Activated naive CD4-positive, alpha-beta T cell treated with anti-CD3 and anti-CD28 coated beads for 36 hours (primary cell): ENCODE measurements at regions of chr7 and their contacts with region 1.

Region 1: DNA sequence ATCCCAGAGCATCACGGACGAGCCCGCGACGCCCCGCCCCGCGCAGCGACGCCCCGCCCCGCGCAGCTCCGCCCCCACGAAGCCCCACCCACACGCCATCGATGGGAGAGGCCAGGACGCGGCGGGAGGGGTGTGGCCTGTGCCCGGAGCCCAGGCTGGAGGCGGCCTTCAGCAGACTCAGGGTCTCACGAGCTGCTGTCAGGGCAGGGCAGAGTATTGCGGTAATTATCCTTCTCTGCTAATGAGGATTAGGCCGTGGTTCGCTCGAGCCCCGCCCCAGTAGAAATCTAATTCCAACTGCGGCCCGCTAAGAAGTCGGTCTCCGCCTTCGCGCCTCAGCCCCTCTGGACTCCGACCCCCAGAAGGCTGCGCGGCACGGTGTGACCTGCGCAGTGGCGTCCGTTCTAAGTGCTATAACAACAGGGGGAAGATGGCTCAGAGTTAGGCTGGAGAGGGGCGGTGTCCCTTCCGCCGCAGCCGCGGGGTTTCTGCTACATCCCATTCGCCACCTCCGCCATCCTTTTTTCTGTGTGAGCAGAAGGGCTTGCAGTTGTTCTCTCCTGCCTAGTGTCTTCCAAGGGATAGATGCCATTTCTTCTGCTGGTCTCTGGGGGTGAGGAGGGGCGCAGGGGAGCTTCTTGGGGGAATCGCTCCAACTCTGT is 337 bp upstream of the NT5C3A start:
- DNase-seq: peak; percentile 93
- H3K4me3 Mint-ChIP-seq: peak overlapping the region; percentile 92
- H3K27ac Mint-ChIP-seq: peak overlapping the region; percentile 88
- H3K4me1 Mint-ChIP-seq: peaks cover 30% of the 10 kb centered on the region
- H3K27me3 Mint-ChIP-seq: no peaks in the 10 kb centered on the region

Region 2: DNA sequence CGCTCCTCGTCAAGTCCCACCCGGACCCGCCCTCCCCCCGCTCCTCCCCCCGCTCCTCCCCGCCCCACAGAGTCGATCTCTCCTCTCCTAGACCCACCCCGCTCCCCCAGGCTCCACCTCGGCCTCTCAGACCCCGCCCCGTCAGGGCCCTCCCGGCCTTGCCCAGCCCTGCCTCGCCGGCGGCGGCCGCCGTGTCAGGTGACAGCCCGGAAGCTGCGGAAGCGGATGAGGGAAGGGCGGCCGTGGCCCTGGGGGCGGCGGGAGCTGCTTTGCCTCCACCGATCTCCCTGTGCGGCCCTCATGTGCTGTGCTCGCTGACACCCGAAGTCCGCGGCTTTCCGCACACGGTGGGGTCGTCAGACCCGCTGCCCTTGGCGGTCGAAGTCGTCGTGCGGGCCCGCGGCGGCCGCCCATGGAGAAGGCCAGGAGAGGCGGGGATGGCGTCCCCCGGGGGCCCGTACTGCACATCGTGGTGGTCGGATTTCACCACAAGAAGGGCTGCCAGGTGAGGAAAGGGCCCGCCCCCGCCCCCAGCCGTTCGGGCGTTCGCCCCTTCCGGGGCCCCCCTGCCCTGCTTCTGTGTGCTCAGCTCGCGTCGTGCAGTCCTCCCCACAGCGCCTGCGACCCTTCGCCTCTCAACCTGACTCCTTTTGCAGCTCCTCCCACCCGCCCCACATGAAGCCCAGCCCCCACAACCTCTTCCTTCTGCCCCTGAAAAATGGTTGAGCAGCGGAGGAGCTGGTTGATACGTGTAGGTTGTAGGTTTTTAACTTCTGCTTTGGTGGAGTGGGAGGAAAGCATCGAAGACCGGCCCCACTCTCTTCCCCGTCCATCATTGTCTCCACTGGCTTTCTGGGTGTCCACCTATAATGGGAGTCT is 567.4 kb before region 1 on chr7 and contains the start of gene AVL9:
- CTCF ChIA-PET with region 1: no interaction called
- intact Hi-C with region 1: loop called (anchors 1 kb)
- DNase-seq: peak; percentile 99
- H3K4me3 Mint-ChIP-seq: peak within 1 kb of the TSS; percentile 96
- H3K27ac Mint-ChIP-seq: peak within 1 kb of the TSS; percentile 92
- H3K4me1 Mint-ChIP-seq: peaks cover 38% of the 10 kb centered on the region
- H3K27me3 Mint-ChIP-seq: no peaks in the 10 kb centered on the region
- total RNA-seq, gene AVL9: 29.6 to 38.0 TPM

Region 3: DNA sequence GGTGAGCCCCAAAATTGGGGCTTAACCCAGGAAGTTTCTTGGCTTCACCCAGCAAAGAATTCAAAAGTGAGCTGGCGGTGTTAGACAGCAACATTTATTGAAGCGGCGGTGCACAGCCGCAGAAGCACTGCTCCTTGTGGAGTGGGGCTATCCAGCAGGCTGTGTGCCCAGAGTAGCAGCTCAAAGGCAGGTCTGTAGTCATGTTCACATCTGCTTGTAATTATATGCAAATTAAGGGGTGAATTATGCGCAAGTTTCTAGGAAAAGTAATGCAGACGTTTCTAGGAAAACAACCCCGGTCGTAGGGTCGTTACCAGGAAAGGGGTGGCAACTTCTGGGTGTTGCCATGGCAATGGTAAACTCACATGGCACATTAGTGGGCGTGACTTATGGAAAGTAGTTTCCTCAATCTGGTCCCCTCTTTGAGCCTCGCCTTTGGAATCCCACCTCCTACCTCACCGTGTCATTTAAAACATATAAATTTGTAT is 157.7 kb before region 1 on chr7:
- CTCF ChIA-PET with region 1: no interaction called
- intact Hi-C with region 1: loop called (anchors 1 kb)
- DNase-seq: peak; percentile 88
- H3K4me3 Mint-ChIP-seq: peak overlapping the region; percentile 70
- H3K27ac Mint-ChIP-seq: peak overlapping the region; percentile 87
- H3K4me1 Mint-ChIP-seq: peaks cover 18% of the 10 kb centered on the region
- H3K27me3 Mint-ChIP-seq: no peaks in the 10 kb centered on the region

Region 4: DNA sequence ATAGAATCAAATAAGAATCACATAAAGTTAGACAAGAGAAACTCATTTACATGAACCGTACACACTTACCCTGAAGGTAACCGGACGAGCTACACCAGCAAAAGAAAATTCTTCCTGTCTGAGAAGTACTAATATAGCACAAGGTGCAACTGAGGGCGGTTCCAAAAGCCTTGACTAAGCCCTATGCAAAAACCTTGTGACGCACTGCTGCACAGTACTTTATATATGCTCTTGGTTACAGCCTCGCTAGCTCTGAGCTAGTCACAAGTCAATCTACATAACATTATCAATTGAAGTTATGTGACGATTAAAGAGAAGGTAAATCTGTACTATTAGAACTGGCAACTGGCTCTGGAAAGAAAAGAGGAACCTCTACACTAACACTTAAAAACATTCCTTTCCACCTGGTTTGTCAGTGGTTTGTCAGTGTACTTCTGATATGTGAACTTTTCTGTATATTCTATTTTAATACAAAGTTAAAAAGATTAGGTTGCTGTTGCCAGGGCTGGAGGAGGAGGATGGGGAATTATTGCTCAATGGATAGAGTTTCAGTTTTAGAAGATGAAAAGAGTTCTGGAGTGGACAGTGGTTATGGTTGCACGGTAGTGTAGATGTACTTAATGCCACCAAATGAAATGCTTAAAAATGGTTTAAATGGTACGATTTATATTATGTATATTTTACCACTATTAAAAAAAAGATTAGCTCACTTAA is 22.0 kb before region 1 on chr7:
- CTCF ChIA-PET with region 1: interaction called, 5 read pairs
- intact Hi-C with region 1: loop called (anchors 1 kb)
- DNase-seq: peak; percentile 84
- H3K4me3 Mint-ChIP-seq: peak overlapping the region; percentile 69
- H3K27ac Mint-ChIP-seq: peak overlapping the region; percentile 86
- H3K4me1 Mint-ChIP-seq: peaks cover 47% of the 10 kb centered on the region
- H3K27me3 Mint-ChIP-seq: no peaks in the 10 kb centered on the region

Region 5: DNA sequence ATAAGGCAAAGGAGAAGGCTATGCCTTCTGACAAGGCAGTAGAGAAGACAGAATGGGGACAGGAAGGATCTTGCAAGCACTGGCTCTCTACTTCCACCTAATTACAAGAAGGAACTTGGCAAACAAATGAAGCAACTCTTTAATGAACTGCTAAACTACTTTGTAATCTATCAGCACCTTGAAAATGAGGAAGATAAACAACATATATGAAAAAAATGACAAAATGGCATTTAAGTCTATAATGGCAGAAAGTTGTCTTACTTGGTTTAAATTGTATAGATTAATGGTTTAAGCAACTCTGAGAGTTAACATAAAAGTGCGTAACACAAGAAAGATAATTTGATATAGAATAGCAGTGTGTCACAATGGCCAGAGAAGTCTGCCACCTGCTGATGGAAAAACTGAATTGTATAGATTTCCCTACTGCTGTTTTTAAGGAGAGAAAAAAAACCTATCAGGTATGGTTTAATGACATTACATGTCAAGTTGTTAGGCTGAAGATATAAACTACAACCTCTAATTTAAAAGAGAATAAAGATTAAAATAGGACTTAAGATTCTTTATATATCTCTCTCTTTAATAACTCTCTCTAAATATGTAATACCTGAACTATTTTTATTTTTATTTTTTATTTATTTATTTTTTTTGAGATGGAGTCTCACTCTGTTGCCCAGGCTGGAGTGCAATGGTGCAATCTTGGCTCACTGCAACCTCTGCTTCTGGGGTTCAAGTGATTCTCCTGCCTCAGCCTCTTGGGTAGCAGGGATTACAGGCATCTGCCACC is 12.2 kb before region 1 on chr7:
- CTCF ChIA-PET with region 1: interaction called, 4 read pairs
- intact Hi-C with region 1: loop called (anchors 1 kb)
- DNase-seq: peak; percentile 38
- H3K4me3 Mint-ChIP-seq: no peak overlapping the region
- H3K27ac Mint-ChIP-seq: no peak overlapping the region
- H3K4me1 Mint-ChIP-seq: peaks cover 54% of the 10 kb centered on the region
- H3K27me3 Mint-ChIP-seq: no peaks in the 10 kb centered on the region

Region 6: GRCh38 chr7:33128990-33129805 is 66.3 kb after region 1 on chr7 and contains the start of gene BBS9:
- CTCF ChIA-PET with region 1: no interaction called
- intact Hi-C with region 1: loop called (anchors 1 kb)
- DNase-seq: peak; percentile 95
- H3K4me3 Mint-ChIP-seq: peak within 1 kb of the TSS; percentile 93
- H3K27ac Mint-ChIP-seq: peak within 1 kb of the TSS; percentile 72
- H3K4me1 Mint-ChIP-seq: peaks cover 21% of the 10 kb centered on the region
- H3K27me3 Mint-ChIP-seq: no peaks in the 10 kb centered on the region
- total RNA-seq, gene BBS9: 7.0 to 7.4 TPM